ENCODE measurements at regions of chr18 and their contacts with region 1.

Region 1: GRCh38 chr18:12726774-12727550 is 24.1 kb downstream of the PSMG2 start:
- DNase-seq: peak; percentile 30 to 61
- H3K4me3 ChIP-seq: no peak overlapping the region
- H3K27ac ChIP-seq: no peak overlapping the region
- H3K4me1 ChIP-seq: no peaks in the 10 kb centered on the region
- H3K27me3 ChIP-seq: no peaks in the 10 kb centered on the region
- CTCF ChIP-seq: peak; percentile 81 to 91 (median 88)
- POLR2A ChIP-seq: no peak

Region 2: GRCh38 chr18:12934454-12935071 is 207.6 kb after region 1 on chr18:
- intact Hi-C with region 1: loop called (anchors 5 kb)
- DNase-seq: peak; percentile 79 to 80
- H3K4me3 ChIP-seq: no peak overlapping the region
- H3K27ac ChIP-seq: no peak overlapping the region
- H3K4me1 ChIP-seq: no peaks in the 10 kb centered on the region
- H3K27me3 ChIP-seq: no peaks in the 10 kb centered on the region
- CTCF ChIP-seq: peak; percentile 82 to 91 (median 86)
- POLR2A ChIP-seq: no peak